ENCODE measurements at regions of chr2 and their contacts with region 1.

Region 1: DNA sequence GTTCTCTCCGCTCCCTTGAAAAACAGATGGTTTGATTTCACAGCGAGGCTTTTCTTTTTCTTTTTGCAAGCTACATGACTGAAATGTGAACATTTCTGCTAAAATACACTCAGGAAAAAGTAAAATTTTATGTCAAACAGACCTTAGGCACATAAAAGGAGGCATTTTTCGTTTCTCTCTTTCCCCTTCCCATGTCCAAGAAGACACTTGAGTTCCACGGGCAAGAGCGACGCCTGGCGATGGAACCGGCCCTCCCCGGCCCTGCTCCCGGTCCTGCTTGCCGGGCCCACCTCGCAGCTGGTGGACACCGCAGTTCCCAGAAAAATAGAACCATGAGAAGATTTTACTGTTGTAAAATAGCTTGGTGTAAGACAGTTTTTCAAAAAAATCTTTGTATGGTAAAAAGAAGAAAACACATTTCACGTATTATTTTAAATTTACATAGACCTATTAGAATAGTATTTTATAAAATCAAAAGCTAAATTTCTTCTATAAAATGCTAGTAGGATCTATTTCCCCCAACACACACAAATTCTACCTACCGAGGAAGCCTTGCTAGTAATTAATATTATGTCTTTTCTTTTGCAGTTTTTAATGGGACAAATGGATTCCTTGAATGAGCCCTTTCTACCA is 2.3 kb upstream of the ALKAL2 start:
- DNase-seq: peak; percentile 83
- H3K4me3 ChIP-seq: peak overlapping the region; percentile 36 to 55
- H3K27ac ChIP-seq: no peak overlapping the region
- H3K4me1 ChIP-seq: peaks cover 0 to 12% of the 10 kb centered on the region in 2 experiments; a peak in 1 of 4 replicates
- H3K27me3 ChIP-seq: peaks cover 26% of the 10 kb centered on the region
- CTCF ChIP-seq: peak; percentile 59
- EP300 ChIP-seq: no peak
- RAD21 ChIP-seq: peak; percentile 71

Region 2: DNA sequence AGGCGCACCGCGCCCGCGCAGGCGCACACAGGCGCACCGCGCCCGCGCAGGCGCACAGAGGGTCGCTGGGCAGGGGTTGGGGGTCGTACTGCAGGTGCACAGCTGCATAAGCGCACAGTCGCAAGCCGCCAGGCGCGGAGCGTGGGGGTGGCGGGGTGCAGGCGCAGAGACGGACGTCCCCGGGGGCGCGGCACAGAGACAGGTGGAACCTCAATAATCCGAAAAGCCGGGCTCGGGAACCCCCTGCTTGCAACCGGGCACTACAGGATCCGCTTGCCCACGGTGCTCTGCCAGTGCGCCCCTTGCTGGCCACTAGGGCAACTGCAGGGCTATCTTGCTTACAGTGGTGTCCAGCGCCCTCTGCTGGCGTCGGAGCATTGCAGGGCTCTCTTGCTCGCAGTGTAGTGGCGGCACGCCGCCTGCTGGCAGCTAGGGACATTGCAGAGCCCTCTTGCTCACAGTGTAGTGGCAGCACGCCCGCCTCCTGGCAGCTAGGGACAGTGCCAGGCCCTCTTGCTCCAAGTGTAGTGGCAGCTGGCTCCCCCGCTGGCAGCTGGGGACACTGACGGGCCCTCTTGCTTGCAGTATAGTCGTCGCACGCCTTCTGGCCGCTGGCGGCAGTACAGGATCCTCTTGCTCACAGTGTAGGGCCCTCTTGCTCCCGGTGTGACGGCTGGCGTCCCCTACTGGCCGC is 278.8 kb before region 1 on chr2:
- CTCF ChIA-PET with region 1: interaction called, 10 read pairs
- POLR2A ChIA-PET with region 1: no interaction called
- DNase-seq: no peak
- H3K4me3 ChIP-seq: peak overlapping the region in 1 of 2 experiments; percentile 53; a peak in 1 of 4 replicates
- H3K27ac ChIP-seq: no peak overlapping the region
- H3K4me1 ChIP-seq: no peaks in the 10 kb centered on the region
- H3K27me3 ChIP-seq: no peaks in the 10 kb centered on the region
- CTCF ChIP-seq: peak; percentile 56
- EP300 ChIP-seq: no peak
- RAD21 ChIP-seq: no peak

Region 3: DNA sequence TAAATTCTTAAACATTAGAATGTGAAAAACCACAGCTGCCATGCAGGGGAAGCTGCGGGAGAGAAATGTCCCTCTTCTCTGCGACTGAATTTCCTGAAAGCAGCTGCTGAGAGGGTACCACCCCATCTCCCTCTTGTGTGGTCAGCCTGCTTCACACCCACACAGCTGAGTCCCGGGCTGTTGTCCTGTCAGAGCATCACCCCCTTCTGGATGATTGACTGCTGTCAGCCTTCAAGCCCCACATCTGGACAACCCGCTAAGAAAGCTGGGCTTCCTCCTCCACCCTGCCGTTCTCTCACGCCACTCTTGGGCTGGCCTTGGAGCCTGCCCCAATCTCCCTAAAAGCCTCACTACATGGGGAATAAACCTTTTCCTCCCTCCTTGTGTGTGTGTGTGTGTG is 52.3 kb before region 1 on chr2:
- CTCF ChIA-PET with region 1: interaction called, 10 read pairs
- POLR2A ChIA-PET with region 1: no interaction called
- DNase-seq: no peak
- H3K4me3 ChIP-seq: no peak overlapping the region
- H3K27ac ChIP-seq: no peak overlapping the region
- H3K4me1 ChIP-seq: no peaks in the 10 kb centered on the region
- H3K27me3 ChIP-seq: no peaks in the 10 kb centered on the region
- CTCF ChIP-seq: no peak
- EP300 ChIP-seq: no peak
- RAD21 ChIP-seq: no peak

Region 4: GRCh38 chr2:246489-247144 is 43.6 kb before region 1 on chr2:
- CTCF ChIA-PET with region 1: interaction called, 14 read pairs
- POLR2A ChIA-PET with region 1: no interaction called
- DNase-seq: peak; percentile 61
- H3K4me3 ChIP-seq: no peak overlapping the region
- H3K27ac ChIP-seq: peak overlapping the region in 1 of 2 experiments; percentile 11; a peak in 1 of 4 replicates
- H3K4me1 ChIP-seq: peaks cover 4 to 5% of the 10 kb centered on the region in 2 experiments; a peak in 2 of 4 replicates
- H3K27me3 ChIP-seq: no peaks in the 10 kb centered on the region
- CTCF ChIP-seq: peak; percentile 73
- EP300 ChIP-seq: no peak
- RAD21 ChIP-seq: peak; percentile 59